Mammary epithelial cell (primary cell): ENCODE measurements at regions of chr1 and their contacts with region 1.

Region 1: GRCh38 chr1:36223993-36224536 is at the start of gene THRAP3:
- DNase-seq: peak; percentile 100
- H3K4me3 ChIP-seq: peak within 1 kb of the TSS; percentile 86 to 90 (median 89)
- H3K27ac ChIP-seq: peak within 1 kb of the TSS; percentile 98
- H3K4me1 ChIP-seq: peaks cover 8% of the 10 kb centered on the region
- H3K27me3 ChIP-seq: no peaks in the 10 kb centered on the region
- CTCF ChIP-seq: no peak
- total RNA-seq, gene THRAP3: 106 to 128 TPM

Region 2: GRCh38 chr1:36155408-36156328 is 68.4 kb before region 1 on chr1 and contains the start of gene MAP7D1:
- CTCF ChIA-PET with region 1: no interaction called
- dilution Hi-C with region 1: no loop called
- in situ Hi-C with region 1: no loop called
- intact Hi-C with region 1: no loop called
- DNase-seq: peak; percentile 76
- H3K4me3 ChIP-seq: peak within 1 kb of the TSS; percentile 59 to 95 (median 84)
- H3K27ac ChIP-seq: peak within 1 kb of the TSS; percentile 84
- H3K4me1 ChIP-seq: peaks cover 48% of the 10 kb centered on the region
- H3K27me3 ChIP-seq: no peaks in the 10 kb centered on the region
- CTCF ChIP-seq: no peak
- total RNA-seq, gene MAP7D1: 99.4 to 331 TPM

Region 3: GRCh38 chr1:36199934-36200741 is 23.9 kb before region 1 on chr1:
- CTCF ChIA-PET with region 1: no interaction called
- dilution Hi-C with region 1: no loop called
- in situ Hi-C with region 1: no loop called
- intact Hi-C with region 1: loop called (anchors 2 kb)
- DNase-seq: peak; percentile 85
- H3K4me3 ChIP-seq: no peak overlapping the region
- H3K27ac ChIP-seq: peak overlapping the region; percentile 58
- H3K4me1 ChIP-seq: peaks cover 21% of the 10 kb centered on the region
- H3K27me3 ChIP-seq: no peaks in the 10 kb centered on the region
- CTCF ChIP-seq: no peak